Psoas muscle (tissue), 8 donors: ENCODE measurements at regions of chr17 and their contacts with region 1.

Region 1: DNA sequence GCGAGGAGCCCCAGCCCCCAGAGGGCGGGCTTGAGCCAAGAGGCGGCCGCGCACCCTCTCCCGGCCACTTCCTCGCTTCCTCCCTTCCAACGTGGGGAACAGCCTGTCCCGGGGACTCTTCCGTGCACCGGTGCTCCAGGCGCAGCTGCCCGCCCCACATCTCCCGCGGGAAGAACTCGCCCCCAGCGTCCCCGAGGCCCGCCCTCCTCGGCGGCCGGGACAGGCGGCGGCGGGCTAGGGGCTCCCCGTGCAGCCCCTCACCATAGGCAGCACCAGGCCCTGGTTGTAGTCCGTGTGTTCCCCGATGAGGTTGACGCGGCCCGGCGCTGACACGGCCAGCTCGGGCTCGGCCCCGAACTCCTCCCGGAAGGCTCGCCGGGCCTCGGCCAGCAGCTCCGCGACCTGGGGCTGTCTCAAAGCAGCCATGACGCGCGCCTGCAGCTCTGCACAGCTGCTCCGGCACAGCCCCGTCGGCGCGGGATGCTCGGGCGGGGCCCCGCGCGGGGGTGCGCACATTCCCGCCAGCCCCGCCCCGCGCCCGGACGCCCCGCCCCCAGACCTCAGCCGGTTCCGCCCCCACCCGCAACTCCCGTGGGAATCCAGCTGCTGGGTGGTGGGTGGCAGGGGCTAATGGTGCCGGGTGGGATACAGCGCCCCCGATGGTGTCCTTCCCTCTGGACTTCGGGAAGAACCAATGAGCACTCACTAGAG is at the start of gene GALK1:
- DNase-seq: peak; percentile 81 to 84
- ATAC-seq: peak; percentile 82 to 88 (median 86)
- H3K4me3 ChIP-seq: peak within 1 kb of the TSS; percentile 83
- H3K27ac ChIP-seq: peak within 1 kb of the TSS; percentile 82
- H3K4me1 ChIP-seq: peaks cover 12% of the 10 kb centered on the region
- H3K27me3 ChIP-seq: no peaks in the 10 kb centered on the region
- CTCF ChIP-seq: peak; percentile 49
- total RNA-seq, gene GALK1: 7.1 to 13.2 (median 9.4) TPM

Region 2: DNA sequence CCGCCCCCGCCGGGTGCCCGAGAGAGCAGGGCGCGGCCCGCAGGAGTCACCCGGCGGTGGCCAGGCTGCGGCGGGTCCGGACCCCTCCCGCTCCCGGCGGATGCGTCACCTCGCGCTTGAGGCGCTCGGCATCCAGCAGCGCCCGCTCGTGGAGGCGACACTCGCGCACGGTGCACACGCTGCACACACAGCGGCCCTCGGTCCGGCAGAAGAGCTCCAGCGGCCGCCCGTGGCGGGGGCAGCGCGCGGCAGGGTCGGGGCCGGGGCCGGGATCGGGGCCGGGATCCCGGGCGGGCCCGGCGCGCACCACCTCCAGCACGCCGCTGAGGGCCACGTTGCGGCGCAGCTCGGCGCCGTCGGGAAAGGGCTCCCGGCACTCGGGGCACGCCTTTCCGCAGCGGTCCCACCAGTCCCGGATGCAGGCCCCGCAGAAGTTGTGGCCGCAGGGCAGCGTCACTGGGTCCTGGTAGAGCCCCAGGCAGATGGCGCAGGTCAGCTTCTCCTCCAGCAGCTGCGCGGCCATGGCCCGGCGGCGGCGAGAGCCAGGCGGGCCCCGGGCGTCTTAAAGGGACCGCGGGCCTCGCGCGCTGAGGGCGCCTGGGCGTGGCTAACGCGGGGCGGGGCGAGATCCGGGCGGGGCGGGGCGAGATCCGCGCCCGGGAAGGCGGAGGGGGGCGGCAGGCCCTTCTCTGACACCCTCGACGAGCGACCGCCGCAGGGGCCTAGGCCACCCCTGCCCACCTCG is 131.7 kb after region 1 on chr17 and contains the start of gene TRIM65:
- intact Hi-C with region 1: loop called in 1 of 2 experiments (anchors 5 kb)
- DNase-seq: peak; percentile 91 to 95
- ATAC-seq: peak; percentile 82 to 87 (median 85)
- H3K4me3 ChIP-seq: peak within 1 kb of the TSS; percentile 79
- H3K27ac ChIP-seq: peak within 1 kb of the TSS; percentile 97
- H3K4me1 ChIP-seq: peaks cover 21% of the 10 kb centered on the region
- H3K27me3 ChIP-seq: no peaks in the 10 kb centered on the region
- CTCF ChIP-seq: peak; percentile 50
- total RNA-seq, gene TRIM65: 9.2 to 10.3 (median 9.7) TPM